Cardiac septum (tissue), 1 donor: ENCODE measurements at regions of chr7 and their contacts with region 1.

Region 1: GRCh38 chr7:50418086-50418515 is 32.0 kb downstream of the FIGNL1 start:
- DNase-seq: no peak

Region 2: DNA sequence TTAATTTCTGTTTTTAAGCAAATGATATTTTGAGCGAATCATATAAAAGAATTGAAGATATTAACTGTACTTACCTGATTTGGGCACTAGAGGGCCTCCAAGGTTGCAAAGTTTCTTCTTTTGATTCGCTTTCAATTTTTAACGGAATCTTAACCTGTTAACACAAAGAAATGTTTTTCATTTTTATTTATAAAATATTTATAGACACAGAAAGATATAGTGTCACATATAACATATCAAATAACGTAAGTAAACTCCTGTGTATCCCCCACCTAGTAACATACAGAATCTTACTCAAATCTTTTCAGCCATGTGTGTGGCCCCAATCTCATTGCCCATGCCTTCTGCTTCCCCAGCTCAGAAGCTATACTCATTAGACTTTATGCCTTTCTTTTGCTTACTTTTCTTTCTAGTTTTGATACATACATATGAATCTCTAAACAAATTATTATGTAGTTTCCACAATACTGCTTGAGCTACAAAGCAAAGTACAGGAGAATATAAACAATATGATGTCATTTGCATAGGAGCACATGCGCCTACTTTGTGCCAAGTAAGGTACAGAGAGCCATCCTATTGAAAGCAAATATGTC is 275.6 kb before region 1 on chr7:
- intact Hi-C with region 1: loop called (anchors 5 kb)
- DNase-seq: no peak

Region 3: GRCh38 chr7:50205011-50205410 is 213.1 kb before region 1 on chr7:
- intact Hi-C with region 1: loop called (anchors 2 kb)
- DNase-seq: no peak

Region 4: GRCh38 chr7:50436133-50436806 is 18.2 kb after region 1 on chr7:
- intact Hi-C with region 1: no loop called
- DNase-seq: no peak